ENCODE measurements at regions of chr22 and their contacts with region 1.

Region 1: GRCh38 chr22:27990879-27991278 is 71.8 kb upstream of the PITPNB start:
- DNase-seq: peak; percentile 83
- ATAC-seq: peak; percentile 89
- H3K4me3 Mint-ChIP-seq: no peak overlapping the region
- H3K27ac Mint-ChIP-seq: no peak overlapping the region; the same call in 1 of the 2 replicates
- H3K4me1 Mint-ChIP-seq: peaks cover 20% of the 10 kb centered on the region
- H3K27me3 Mint-ChIP-seq: no peaks in the 10 kb centered on the region
- CTCF ChIP-seq: peak; percentile 55; the same call in 1 of the 2 replicates

Region 2: GRCh38 chr22:27880778-27881394 is 110.0 kb before region 1 on chr22:
- CTCF ChIA-PET with region 1: interaction called, 15 read pairs
- POLR2A ChIA-PET with region 1: no interaction called
- DNase-seq: no peak
- ATAC-seq: peak; percentile 28
- H3K4me3 Mint-ChIP-seq: no peak overlapping the region
- H3K27ac Mint-ChIP-seq: peak overlapping the region; percentile 33; the same call in 1 of the 2 replicates
- H3K4me1 Mint-ChIP-seq: peaks cover 81% of the 10 kb centered on the region
- H3K27me3 Mint-ChIP-seq: no peaks in the 10 kb centered on the region
- CTCF ChIP-seq: peak; percentile 47

Region 3: DNA sequence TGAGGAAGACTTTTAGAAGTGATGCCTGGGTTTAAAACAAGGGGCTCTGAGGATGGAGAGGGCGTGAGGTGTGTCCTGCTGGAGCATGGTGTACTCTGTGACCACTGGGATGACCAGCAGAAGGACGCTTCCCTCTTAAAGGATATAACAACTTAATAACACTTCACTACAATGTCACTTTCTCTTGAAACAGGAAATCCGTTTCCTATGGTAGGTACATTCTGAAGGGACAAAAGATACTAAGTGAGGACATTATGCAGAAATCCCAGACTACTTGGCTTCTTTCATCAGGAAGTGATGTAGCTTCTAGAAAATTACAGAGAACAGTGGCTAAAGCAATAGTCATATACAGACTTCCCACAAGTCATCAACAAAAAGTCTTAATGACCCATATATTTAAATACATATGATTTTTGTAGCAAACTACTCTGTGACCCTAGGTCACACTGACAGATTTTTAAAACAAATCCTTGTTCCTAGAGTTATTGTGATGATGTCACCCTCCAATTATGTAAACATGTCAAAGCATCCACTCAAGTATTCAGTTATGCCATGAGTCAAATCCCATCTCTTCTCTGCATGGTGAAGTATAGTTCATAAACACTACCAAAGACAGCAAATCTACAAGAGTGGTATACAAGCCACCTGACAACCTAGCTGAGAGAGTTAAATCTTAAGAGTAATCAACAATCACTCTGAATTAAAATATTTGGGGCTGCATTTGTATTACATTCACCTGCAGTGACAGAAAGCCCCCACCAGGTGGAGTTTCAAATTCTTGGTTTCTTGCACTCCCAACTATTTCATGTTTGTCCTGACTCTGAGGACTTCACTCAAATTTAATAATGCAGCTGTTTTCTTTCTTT is 104.7 kb before region 1 on chr22:
- CTCF ChIA-PET with region 1: interaction called, 15 read pairs
- POLR2A ChIA-PET with region 1: no interaction called
- DNase-seq: peak; percentile 46
- ATAC-seq: no peak
- H3K4me3 Mint-ChIP-seq: no peak overlapping the region
- H3K27ac Mint-ChIP-seq: peak overlapping the region; percentile 54
- H3K4me1 Mint-ChIP-seq: peaks cover 55% of the 10 kb centered on the region
- H3K27me3 Mint-ChIP-seq: no peaks in the 10 kb centered on the region
- CTCF ChIP-seq: peak; percentile 82

Region 4: GRCh38 chr22:27919222-27919941 is 71.5 kb before region 1 on chr22 and contains the start of gene PITPNB:
- CTCF ChIA-PET with region 1: interaction called, 38 read pairs
- POLR2A ChIA-PET with region 1: interaction called, 4 read pairs
- DNase-seq: peak; percentile 99
- ATAC-seq: peak; percentile 87
- H3K4me3 Mint-ChIP-seq: peak within 1 kb of the TSS; percentile 96
- H3K27ac Mint-ChIP-seq: peak within 1 kb of the TSS; percentile 99
- H3K4me1 Mint-ChIP-seq: peaks cover 39% of the 10 kb centered on the region
- H3K27me3 Mint-ChIP-seq: no peaks in the 10 kb centered on the region
- CTCF ChIP-seq: no peak
- total RNA-seq, gene PITPNB: 70.7 to 76.2 TPM (median 71.7 TPM) in 3 replicates

Region 5: GRCh38 chr22:27980424-27981148 is 10.3 kb before region 1 on chr22:
- CTCF ChIA-PET with region 1: interaction called, 18 read pairs
- POLR2A ChIA-PET with region 1: no interaction called
- DNase-seq: peak; percentile 73
- ATAC-seq: peak; percentile 96
- H3K4me3 Mint-ChIP-seq: peak overlapping the region; percentile 25; the same call in 1 of the 2 replicates
- H3K27ac Mint-ChIP-seq: peak overlapping the region; percentile 80
- H3K4me1 Mint-ChIP-seq: peaks cover 16% of the 10 kb centered on the region
- H3K27me3 Mint-ChIP-seq: no peaks in the 10 kb centered on the region
- CTCF ChIP-seq: no peak

Region 6: DNA sequence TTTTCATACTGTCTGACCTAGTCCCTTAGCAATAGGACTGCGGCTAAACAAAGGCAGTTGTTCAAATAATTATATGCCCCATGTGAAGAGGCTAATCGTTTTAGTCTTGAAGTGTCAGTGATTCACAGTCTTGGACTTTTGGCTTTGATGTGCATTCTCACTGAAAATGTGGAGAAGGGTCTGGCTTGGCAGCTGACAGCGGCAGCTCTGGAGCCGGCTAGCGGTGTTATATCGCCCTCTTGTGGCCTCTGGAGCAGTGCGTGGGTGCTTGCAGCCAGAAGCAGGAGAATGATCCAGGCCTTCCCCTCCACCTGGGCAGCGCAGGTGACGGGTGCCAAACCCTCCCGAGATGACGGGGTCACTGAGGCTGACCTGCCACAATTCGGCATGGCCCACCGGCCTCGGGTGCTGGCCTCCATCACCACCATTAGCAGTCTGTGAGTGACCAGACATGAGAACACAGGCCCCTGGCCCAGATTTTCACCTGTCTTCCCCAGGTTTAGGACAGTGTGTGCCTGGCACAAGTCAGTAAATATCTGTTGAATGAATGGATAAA is 18.5 kb after region 1 on chr22:
- CTCF ChIA-PET with region 1: interaction called, 19 read pairs
- POLR2A ChIA-PET with region 1: no interaction called
- DNase-seq: peak; percentile 88
- ATAC-seq: peak; percentile 87
- H3K4me3 Mint-ChIP-seq: no peak overlapping the region
- H3K27ac Mint-ChIP-seq: no peak overlapping the region
- H3K4me1 Mint-ChIP-seq: no peaks in the 10 kb centered on the region
- H3K27me3 Mint-ChIP-seq: no peaks in the 10 kb centered on the region
- CTCF ChIP-seq: peak; percentile 93